ENCODE measurements at regions of chr4 and their contacts with region 1.

Region 1: GRCh38 chr4:22688236-22688635 is 4.5 kb upstream of the GBA3 start:
- DNase-seq: no peak
- ATAC-seq: no peak
- H3K4me3 ChIP-seq: no peak overlapping the region
- H3K27ac ChIP-seq: no peak overlapping the region
- H3K4me1 ChIP-seq: peaks cover 0 to 6% (median 0%) of the 10 kb centered on the region in 9 donors
- H3K27me3 ChIP-seq: peaks cover 0 to 10% (median 0%) of the 10 kb centered on the region in 7 donors
- CTCF ChIP-seq: no peak

Region 2: GRCh38 chr4:21780158-21780557 is 908.1 kb before region 1 on chr4:
- intact Hi-C with region 1: loop called in 5 of 10 experiments (anchors 5 to 10 kb)
- DNase-seq: no peak
- ATAC-seq: no peak
- H3K4me3 ChIP-seq: no peak overlapping the region
- H3K27ac ChIP-seq: no peak overlapping the region
- H3K4me1 ChIP-seq: no peaks in the 10 kb centered on the region
- H3K27me3 ChIP-seq: peaks cover 0 to 14% (median 0%) of the 10 kb centered on the region in 7 donors
- CTCF ChIP-seq: no peak

Region 3: DNA sequence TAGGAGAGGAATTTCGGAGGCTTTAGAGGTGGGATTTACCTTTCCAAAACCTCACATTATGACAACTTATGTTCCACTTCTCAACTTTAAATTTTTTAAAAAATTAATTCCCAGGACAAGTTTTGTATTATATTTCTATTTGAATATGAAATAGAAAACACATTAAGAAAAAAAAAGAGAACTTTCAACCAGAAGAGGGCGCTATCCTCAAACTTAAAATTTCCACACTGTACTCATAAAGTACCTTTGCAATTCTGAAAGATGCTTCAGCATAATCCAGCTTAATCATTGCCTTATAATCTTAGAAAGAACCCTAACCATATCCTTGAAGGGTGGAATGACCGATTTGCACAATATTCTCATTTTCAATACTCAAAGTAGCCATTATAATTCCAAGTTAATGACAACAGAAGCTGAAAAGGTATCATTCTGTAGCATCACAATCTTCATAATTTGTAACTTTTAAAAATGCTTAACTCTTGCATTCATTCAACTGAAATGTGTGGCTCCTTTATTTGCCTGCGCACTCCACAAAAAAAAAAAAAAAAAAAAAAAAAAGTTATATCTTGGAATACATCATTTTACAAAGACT is 897.7 kb before region 1 on chr4:
- intact Hi-C with region 1: loop called (anchors 2 to 10 kb)
- DNase-seq: no peak
- ATAC-seq: no peak
- H3K4me3 ChIP-seq: no peak overlapping the region
- H3K27ac ChIP-seq: no peak overlapping the region
- H3K4me1 ChIP-seq: no peaks in the 10 kb centered on the region
- H3K27me3 ChIP-seq: no peaks in the 10 kb centered on the region
- CTCF ChIP-seq: peak; percentile 11 to 62 (median 53)

Region 4: GRCh38 chr4:22410645-22411247 is 277.5 kb before region 1 on chr4:
- intact Hi-C with region 1: loop called (anchors 2 to 10 kb)
- DNase-seq: no peak
- ATAC-seq: no peak
- H3K4me3 ChIP-seq: no peak overlapping the region
- H3K27ac ChIP-seq: no peak overlapping the region
- H3K4me1 ChIP-seq: peaks cover 0 to 6% (median 0%) of the 10 kb centered on the region in 9 donors
- H3K27me3 ChIP-seq: no peaks in the 10 kb centered on the region
- CTCF ChIP-seq: peak; percentile 20 to 69 (median 59)

Region 5: DNA sequence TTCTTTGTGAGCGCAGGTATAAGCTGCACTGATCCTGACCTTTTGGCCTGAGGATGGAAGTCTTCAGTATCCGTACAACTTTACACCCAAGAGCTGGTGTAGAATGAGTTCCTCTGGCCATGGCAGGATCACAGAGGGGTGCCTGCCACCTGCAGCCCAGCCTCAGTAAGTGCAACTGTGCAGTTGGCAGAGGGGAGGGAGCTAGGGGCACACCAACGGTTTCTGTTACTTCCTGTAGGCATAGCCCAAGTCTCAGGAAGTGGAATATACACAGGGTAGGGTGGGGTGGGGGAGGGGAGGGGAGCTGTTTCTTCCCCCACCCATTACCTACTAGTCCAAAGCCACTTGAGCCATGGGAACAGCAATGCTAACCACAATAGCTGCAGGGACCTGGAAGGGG is 80.9 kb before region 1 on chr4:
- intact Hi-C with region 1: loop called in 1 of 10 experiments (anchors 10 kb)
- DNase-seq: peak in 1 of 2 donors; percentile 27
- ATAC-seq: peak; percentile 81 to 99 (median 86)
- H3K4me3 ChIP-seq: no peak overlapping the region
- H3K27ac ChIP-seq: no peak overlapping the region
- H3K4me1 ChIP-seq: no peaks in the 10 kb centered on the region
- H3K27me3 ChIP-seq: no peaks in the 10 kb centered on the region
- CTCF ChIP-seq: peak; percentile 33 to 66 (median 52)

Region 6: GRCh38 chr4:22877486-22878052 is 189.3 kb after region 1 on chr4:
- intact Hi-C with region 1: no loop called
- DNase-seq: no peak
- ATAC-seq: no peak
- H3K4me3 ChIP-seq: no peak overlapping the region
- H3K27ac ChIP-seq: no peak overlapping the region
- H3K4me1 ChIP-seq: no peaks in the 10 kb centered on the region
- H3K27me3 ChIP-seq: no peaks in the 10 kb centered on the region
- CTCF ChIP-seq: no peak

Measured in heart right ventricle (tissue), 16 donors.